ENCODE measurements at regions of chr15 and their contacts with region 1.

Region 1: DNA sequence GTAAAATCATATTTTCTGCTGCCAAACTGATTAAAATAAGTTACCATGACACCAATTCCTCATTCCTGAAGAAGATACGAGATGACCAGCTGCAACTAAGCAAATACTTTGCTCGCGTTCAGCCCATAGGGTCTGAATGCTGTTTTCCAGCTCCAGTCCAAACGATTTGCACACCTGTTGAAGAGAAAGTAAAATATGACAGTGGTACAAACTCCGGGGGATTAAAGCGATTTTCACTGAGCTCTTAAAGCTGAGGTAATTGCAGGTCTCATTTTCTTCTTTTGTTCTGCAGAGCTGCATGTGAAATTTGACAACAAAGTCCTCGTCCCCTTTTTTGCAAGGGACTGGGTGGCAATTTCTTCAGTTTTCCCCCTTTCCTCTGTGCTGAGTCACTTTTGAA is 118.4 kb downstream of the NR2F2 start:
- DNase-seq: no peak
- ATAC-seq: no peak

Region 2: DNA sequence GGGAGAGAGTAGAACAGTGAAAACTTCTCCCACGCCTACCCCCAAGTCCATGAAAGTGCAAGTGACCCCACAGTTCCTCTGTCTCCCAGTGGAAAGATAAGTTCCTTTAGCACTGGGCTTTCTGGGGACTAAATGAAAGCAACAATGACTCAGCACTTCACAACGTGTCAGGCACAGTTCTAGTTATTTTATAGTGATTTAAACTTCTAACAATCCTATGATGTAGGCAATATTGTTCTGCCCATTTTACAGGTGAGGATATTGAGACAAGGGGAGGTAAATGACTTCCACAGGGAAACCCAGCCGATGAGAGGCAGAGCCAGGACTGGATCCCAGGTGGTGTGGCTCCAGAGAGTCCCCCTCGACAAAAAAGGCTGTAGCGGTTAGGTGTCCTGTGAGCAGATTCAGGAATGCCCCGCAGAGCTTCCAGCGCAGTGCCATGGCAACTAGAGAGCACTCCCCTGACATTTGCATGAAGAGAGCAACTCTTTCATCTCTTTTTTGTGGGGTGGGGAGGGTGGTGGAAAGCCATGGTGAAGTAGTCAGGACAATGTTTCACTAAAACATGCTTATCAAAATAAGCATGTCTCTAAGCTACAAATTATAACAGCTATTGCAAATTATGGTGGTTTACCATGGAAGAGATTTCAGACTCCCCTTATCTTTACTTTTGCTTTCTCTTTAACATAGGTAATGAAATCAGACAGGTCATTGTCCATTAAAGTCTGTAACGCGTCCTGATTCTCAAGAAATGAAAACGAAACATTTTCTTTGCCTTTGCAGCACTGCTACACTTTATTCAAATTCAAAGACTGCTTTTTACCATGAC is 56.3 kb before region 1 on chr15:
- intact Hi-C with region 1: loop called in 1 of 2 experiments (anchors 10 kb)
- DNase-seq: no peak
- ATAC-seq: no peak

Measured in left colon (tissue), 2 donors.